Dorsolateral prefrontal cortex (tissue), 120 donors: ENCODE measurements at regions of chr11 and their contacts with region 1.

Region 1: GRCh38 chr11:70186420-70186819 is 16.7 kb upstream of the FADD start:
- DNase-seq: no peak
- H3K4me3 ChIP-seq: no peak overlapping the region
- H3K27ac ChIP-seq: no peak overlapping the region
- H3K27me3 ChIP-seq: peaks cover 0 to 5% (median 0%) of the 10 kb centered on the region in 45 donors
- CTCF ChIP-seq: no peak

Region 2: DNA sequence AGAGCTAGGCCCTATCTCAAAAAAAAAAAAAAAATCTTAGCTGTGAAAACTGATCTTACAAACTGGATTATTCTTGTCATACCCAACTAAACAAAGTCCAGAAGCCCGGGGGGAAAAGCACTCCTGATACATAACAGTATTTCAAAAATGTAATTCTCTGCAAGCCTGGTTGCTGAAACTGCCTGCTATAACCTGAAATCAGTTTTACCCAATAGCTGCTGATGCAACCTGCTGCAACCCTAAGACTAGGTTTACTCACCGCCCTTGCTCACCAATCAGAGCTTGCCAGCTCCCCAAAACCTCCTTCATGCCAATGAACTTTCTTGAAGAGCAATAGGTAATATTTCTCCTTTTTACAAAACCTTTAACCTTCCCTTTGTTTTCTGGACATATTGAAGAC is 495.0 kb before region 1 on chr11:
- intact Hi-C with region 1: loop called (anchors 5 kb)
- DNase-seq: no peak
- H3K4me3 ChIP-seq: no peak overlapping the region
- H3K27ac ChIP-seq: no peak overlapping the region
- H3K27me3 ChIP-seq: peaks cover 0 to 28% (median under 1%) of the 10 kb centered on the region in 45 donors
- CTCF ChIP-seq: no peak